CD4-positive, alpha-beta memory T cell (primary cell): ENCODE measurements at regions of chr7 and their contacts with region 1.

Region 1: DNA sequence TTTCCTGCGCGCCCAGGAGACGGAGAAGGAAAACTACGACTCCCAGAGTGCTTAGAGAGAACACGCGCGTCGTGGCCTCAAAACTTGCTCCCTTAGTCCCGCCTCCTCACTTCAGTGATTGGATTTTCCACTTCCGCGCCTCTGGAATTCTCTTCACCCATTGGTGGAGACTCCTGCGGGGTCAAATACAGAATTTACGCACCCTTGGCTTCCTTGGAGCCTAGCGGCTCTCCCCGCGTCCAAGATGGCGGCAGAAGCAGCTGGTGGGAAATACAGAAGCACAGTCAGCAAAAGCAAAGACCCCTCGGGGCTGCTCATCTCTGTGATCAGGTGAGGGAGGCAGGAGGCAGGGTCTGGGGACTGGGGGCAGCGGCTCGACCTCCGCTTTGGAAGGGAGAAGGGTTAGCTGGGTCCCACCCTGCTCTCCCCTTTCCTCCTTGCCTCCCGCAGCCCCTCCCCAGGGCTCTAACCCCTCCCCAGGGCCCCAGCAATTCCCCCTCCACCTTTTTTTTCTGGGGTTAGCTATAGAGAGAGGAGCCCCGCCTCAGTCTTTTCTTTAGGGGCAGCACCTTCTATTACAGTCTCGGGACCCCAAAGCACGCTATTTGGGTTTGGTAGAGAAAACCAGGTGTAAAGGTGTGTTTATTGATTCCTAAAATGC is at the start of gene EXOC4:
- DNase-seq: peak; percentile 95 to 97 (median 96)
- H3K4me3 ChIP-seq: peak within 1 kb of the TSS; percentile 73 to 97
- H3K4me3 Mint-ChIP-seq: peak within 1 kb of the TSS; percentile 93 to 97 (median 96)
- H3K27ac ChIP-seq: peak within 1 kb of the TSS; percentile 82
- H3K27ac Mint-ChIP-seq: peak within 1 kb of the TSS; percentile 83 to 98 (median 97)
- H3K4me1 ChIP-seq: peaks cover 25% of the 10 kb centered on the region
- H3K4me1 Mint-ChIP-seq: peaks cover 25 to 48% (median 36%) of the 10 kb centered on the region in 4 donors
- H3K27me3 ChIP-seq: no peaks in the 10 kb centered on the region
- H3K27me3 Mint-ChIP-seq: no peaks in the 10 kb centered on the region
- total RNA-seq, gene EXOC4: 68.9 to 81.2 TPM

Region 2: DNA sequence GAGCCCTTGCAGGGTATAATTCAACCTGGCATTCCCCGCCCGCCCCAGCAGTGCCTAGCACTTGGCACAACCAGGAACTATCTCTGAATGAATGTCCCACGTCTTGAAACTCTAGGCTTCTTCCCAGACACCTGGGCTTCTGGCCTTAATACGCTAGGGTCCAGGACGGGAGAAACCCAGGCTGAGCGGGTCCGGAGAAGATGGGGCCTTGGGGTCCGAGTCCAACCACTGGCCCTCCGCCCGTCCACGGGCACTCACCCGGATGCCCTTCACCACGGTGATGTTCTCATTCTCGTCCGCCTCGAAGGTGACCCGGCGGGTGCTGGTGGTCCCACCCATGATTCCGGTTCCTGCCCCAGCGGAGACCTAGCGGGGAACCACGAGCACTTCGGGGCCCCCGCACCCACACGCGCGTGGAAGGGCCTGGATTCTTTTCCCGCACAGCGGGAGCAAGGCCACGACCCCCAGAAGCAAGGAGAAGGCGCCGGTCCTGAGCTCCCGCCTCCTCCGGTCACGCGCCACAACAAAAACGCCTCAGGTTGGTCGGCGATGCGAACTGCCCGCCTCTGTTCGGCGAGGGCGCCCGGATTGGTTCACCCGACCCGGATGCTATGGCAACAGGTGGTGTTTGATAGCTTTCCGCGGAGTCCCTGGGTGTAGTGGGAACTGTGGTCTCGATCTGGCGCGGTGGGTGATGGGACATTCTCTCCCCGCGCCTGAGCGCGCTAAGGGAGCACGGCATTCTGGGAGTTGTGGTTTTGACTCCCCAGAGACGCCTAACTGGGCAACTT is 171.2 kb before region 1 on chr7 and contains the start of gene CHCHD3:
- CTCF ChIA-PET with region 1: interaction called, 3 read pairs
- POLR2A ChIA-PET with region 1: interaction called, 7 read pairs
- intact Hi-C with region 1: loop called (anchors 1 kb)
- DNase-seq: peak; percentile 95 to 98 (median 95)
- H3K4me3 ChIP-seq: peak within 1 kb of the TSS; percentile 82 to 84
- H3K4me3 Mint-ChIP-seq: peak within 1 kb of the TSS; percentile 82 to 96 (median 92)
- H3K27ac ChIP-seq: peak within 1 kb of the TSS; percentile 92
- H3K27ac Mint-ChIP-seq: peak within 1 kb of the TSS; percentile 88 to 95 (median 95)
- H3K4me1 ChIP-seq: peaks cover 36% of the 10 kb centered on the region
- H3K4me1 Mint-ChIP-seq: peaks cover 17 to 40% (median 27%) of the 10 kb centered on the region in 4 donors
- H3K27me3 ChIP-seq: no peaks in the 10 kb centered on the region
- H3K27me3 Mint-ChIP-seq: no peaks in the 10 kb centered on the region
- total RNA-seq, gene CHCHD3: 25.2 to 25.7 TPM

Region 3: DNA sequence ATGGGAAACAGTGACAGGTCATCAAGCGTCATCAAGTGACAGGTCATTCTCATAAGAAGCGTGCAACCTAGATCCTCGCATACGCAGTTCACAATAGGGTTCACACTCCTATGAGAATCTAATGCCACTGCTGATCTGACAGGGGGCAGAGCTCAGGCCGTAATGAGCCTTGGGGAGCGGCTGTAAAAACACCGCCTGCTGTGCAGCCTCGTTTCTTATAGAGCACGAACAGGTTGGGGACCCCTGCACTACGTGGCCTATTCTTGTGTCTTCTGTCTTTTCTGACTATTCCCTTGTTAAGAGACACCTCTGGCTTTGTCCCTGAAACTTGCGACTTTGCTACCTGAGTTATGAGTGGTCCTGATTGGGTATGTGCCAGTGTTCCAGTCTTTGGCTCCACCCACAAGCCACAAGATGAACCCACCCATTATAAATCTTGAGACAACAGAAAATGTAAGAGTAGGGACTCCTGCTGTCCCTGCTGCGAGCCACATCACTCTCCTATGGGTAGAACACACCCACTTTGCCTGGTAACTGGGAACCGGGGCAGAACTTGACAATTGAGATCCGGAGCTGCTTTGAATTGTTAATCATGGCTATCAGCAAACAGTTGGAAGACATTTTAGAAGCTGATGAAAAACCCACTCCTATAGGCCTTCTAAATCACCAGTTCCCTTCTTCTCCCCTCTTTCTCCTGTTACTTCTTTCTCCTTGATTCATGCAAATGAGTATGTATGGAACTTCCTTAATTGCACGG is 56.0 kb before region 1 on chr7:
- CTCF ChIA-PET with region 1: no interaction called
- POLR2A ChIA-PET with region 1: no interaction called
- intact Hi-C with region 1: no loop called
- DNase-seq: no peak
- H3K4me3 ChIP-seq: no peak overlapping the region
- H3K4me3 Mint-ChIP-seq: no peak overlapping the region
- H3K27ac ChIP-seq: no peak overlapping the region
- H3K27ac Mint-ChIP-seq: no peak overlapping the region
- H3K4me1 ChIP-seq: no peaks in the 10 kb centered on the region
- H3K4me1 Mint-ChIP-seq: no peaks in the 10 kb centered on the region
- H3K27me3 ChIP-seq: no peaks in the 10 kb centered on the region
- H3K27me3 Mint-ChIP-seq: peaks cover 11 to 12% of the 10 kb centered on the region in 2 donors